ENCODE measurements at regions of chr19 and their contacts with region 1.

Region 1: DNA sequence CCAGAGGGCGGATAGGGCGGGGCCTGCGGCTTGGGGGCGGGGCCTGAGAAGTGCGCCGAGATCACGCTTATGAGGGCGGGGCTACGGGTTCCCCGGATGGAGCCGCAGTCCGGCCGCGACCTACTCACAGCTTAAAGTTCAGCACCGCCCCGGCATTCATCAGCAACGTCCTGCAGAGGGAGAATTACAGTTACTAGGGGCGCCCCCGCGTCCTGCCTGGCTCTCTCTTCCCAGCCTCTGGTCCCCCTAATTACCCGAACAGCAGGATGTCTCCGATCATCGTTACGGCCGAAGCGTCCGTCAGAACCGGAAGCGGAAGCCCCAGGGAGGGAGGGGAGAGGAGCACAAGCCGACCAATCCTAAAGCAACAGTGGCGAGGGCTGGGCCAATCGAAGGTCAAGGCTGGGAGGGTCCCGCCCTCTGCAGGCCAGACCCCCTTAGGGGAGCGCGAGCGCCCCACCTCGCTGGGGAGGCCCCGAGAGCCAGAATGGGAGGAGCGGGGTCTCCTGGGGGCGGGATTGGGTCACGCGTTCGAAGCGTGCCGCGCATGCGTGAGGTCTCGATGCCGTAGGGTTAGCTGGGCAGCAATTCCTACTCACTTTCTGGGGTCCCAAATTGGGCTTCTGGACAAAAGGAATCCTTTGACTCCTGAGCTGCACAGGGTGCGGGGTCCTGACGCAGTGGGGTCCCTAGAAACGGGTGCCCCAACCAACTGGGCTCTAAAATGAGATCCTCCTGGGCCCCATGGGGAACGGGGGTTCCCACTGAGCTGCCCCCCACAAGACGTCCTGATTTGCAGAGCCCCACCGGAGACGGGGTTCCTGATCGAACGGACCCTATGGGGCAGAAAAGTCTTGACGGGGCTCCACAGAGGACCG is at the start of gene SMIM7:
- DNase-seq: peak; percentile 100
- ATAC-seq: peak; percentile 93
- H3K4me3 ChIP-seq: peak within 1 kb of the TSS; percentile 62 to 89 (median 83)
- H3K4me3 Mint-ChIP-seq: peak within 1 kb of the TSS; percentile 99
- H3K27ac ChIP-seq: peak within 1 kb of the TSS; percentile 70 to 79
- H3K27ac Mint-ChIP-seq: peak within 1 kb of the TSS; percentile 97
- H3K4me1 ChIP-seq: peaks cover 26 to 42% of the 10 kb centered on the region in 2 donors
- H3K4me1 Mint-ChIP-seq: peaks cover 46% of the 10 kb centered on the region
- H3K27me3 ChIP-seq: no peaks in the 10 kb centered on the region
- H3K27me3 Mint-ChIP-seq: no peaks in the 10 kb centered on the region
- CTCF ChIP-seq: no peak
- total RNA-seq, gene SMIM7: 132 and 133 TPM in 2 replicates

Region 2: GRCh38 chr19:16435238-16435917 is 224.7 kb before region 1 on chr19:
- CTCF ChIA-PET with region 1: no interaction called
- POLR2A ChIA-PET with region 1: no interaction called
- intact Hi-C with region 1: no loop called
- DNase-seq: no peak
- ATAC-seq: no peak
- H3K4me3 ChIP-seq: no peak overlapping the region
- H3K4me3 Mint-ChIP-seq: no peak overlapping the region
- H3K27ac ChIP-seq: peak overlapping the region in 1 of 2 donors; percentile 53
- H3K27ac Mint-ChIP-seq: peak overlapping the region; percentile 79
- H3K4me1 ChIP-seq: peaks cover 17 to 34% of the 10 kb centered on the region in 2 donors
- H3K4me1 Mint-ChIP-seq: peaks cover 35% of the 10 kb centered on the region
- H3K27me3 ChIP-seq: no peaks in the 10 kb centered on the region
- H3K27me3 Mint-ChIP-seq: no peaks in the 10 kb centered on the region
- CTCF ChIP-seq: no peak

Region 3: GRCh38 chr19:16446724-16447368 is 213.2 kb before region 1 on chr19:
- CTCF ChIA-PET with region 1: no interaction called
- POLR2A ChIA-PET with region 1: no interaction called
- intact Hi-C with region 1: loop called (anchors 5 kb)
- DNase-seq: peak; percentile 79
- ATAC-seq: peak; percentile 34
- H3K4me3 ChIP-seq: peak overlapping the region in 1 of 5 experiments; percentile 26
- H3K4me3 Mint-ChIP-seq: peak overlapping the region; percentile 76
- H3K27ac ChIP-seq: peak overlapping the region; percentile 93 to 98
- H3K27ac Mint-ChIP-seq: peak overlapping the region; percentile 97
- H3K4me1 ChIP-seq: peaks cover 86 to 94% of the 10 kb centered on the region in 2 donors
- H3K4me1 Mint-ChIP-seq: peaks cover 85% of the 10 kb centered on the region
- H3K27me3 ChIP-seq: no peaks in the 10 kb centered on the region
- H3K27me3 Mint-ChIP-seq: no peaks in the 10 kb centered on the region
- CTCF ChIP-seq: no peak

Region 4: GRCh38 chr19:16542045-16542909 is 117.8 kb before region 1 on chr19 and contains the start of gene CHERP:
- CTCF ChIA-PET with region 1: no interaction called
- POLR2A ChIA-PET with region 1: interaction called, 8 read pairs
- intact Hi-C with region 1: loop called (anchors 1 kb)
- DNase-seq: peak; percentile 97
- ATAC-seq: peak; percentile 81
- H3K4me3 ChIP-seq: peak within 1 kb of the TSS; percentile 76 to 90 (median 88)
- H3K4me3 Mint-ChIP-seq: peak within 1 kb of the TSS; percentile 91
- H3K27ac ChIP-seq: peak within 1 kb of the TSS; percentile 61 to 77
- H3K27ac Mint-ChIP-seq: peak within 1 kb of the TSS; percentile 89
- H3K4me1 ChIP-seq: peaks cover 29 to 52% of the 10 kb centered on the region in 2 donors
- H3K4me1 Mint-ChIP-seq: peaks cover 55% of the 10 kb centered on the region
- H3K27me3 ChIP-seq: no peaks in the 10 kb centered on the region
- H3K27me3 Mint-ChIP-seq: no peaks in the 10 kb centered on the region
- CTCF ChIP-seq: no peak
- total RNA-seq, gene CHERP: 87.3 and 98.9 TPM in 2 replicates

Region 5: DNA sequence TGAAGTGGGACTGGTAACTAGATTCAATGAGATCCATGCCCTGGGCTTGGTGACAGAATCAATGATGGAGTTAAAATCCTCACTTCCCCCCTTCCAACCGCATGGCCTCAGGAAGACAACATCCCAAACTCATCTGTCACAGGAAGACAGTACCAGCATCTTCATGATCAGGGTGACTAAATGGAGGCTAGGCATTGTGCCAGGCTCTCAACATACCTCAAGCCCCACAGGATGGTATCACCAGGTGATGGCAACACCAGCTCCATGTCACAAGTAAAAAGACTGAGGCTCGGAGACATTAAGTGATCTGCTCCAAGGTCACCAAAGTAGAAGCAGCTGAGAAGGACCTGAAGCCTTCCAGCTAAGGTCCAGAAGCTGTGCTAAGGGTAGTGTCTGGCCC is 46.2 kb before region 1 on chr19:
- CTCF ChIA-PET with region 1: no interaction called
- POLR2A ChIA-PET with region 1: interaction called, 14 read pairs
- intact Hi-C with region 1: no loop called
- DNase-seq: no peak
- ATAC-seq: no peak
- H3K4me3 ChIP-seq: no peak overlapping the region
- H3K4me3 Mint-ChIP-seq: no peak overlapping the region
- H3K27ac ChIP-seq: no peak overlapping the region
- H3K27ac Mint-ChIP-seq: peak overlapping the region; percentile 26
- H3K4me1 ChIP-seq: peaks cover 59 to 60% of the 10 kb centered on the region in 2 donors
- H3K4me1 Mint-ChIP-seq: peaks cover 85% of the 10 kb centered on the region
- H3K27me3 ChIP-seq: no peaks in the 10 kb centered on the region
- H3K27me3 Mint-ChIP-seq: no peaks in the 10 kb centered on the region
- CTCF ChIP-seq: no peak

Region 6: DNA sequence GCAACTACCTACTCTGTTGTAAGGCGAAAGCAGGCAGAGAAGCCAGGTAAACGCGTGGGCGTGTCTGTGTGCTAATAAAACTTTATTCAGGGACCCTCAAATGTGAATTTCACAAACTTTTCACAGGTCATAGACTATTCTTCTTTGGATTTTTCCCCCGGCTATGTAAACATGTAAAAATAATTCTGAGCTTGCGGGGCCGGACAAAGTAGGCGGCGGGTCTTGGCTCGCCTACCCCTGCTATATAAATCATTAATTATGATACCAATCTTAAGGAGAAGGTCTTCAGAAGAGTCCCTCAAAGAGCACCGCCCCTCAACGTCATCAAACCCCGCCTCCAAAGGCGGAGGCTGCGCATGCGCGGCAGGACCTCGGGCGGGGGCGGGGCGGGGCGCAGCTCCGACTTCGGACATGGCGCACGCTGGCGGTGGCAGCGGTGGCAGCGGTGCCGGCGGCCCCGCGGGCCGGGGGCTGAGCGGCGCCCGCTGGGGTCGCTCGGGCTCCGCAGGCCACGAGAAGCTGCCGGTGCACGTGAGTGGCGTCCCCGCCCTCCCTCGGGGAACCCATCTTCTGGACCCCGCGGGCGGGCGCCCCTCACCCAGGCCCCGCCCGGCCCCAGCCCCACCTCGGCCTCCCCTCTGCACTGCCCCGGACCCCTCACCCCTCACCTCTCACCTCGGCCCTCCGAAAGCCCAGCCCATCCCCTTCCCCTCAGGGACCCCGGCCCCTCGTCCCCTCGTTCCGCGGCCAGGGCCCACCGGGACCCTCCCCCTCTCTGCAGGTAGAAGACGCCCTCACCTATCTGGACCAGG is 169.1 kb after region 1 on chr19 and contains the start of gene SIN3B:
- CTCF ChIA-PET with region 1: no interaction called
- POLR2A ChIA-PET with region 1: no interaction called
- intact Hi-C with region 1: loop called (anchors 2 kb)
- DNase-seq: peak; percentile 97
- ATAC-seq: peak; percentile 90
- H3K4me3 ChIP-seq: peak within 1 kb of the TSS; percentile 35 to 78 (median 66)
- H3K4me3 Mint-ChIP-seq: peak within 1 kb of the TSS; percentile 87
- H3K27ac ChIP-seq: peak within 1 kb of the TSS; percentile 20 to 76
- H3K27ac Mint-ChIP-seq: peak within 1 kb of the TSS; percentile 84
- H3K4me1 ChIP-seq: peaks cover 29 to 34% of the 10 kb centered on the region in 2 donors
- H3K4me1 Mint-ChIP-seq: peaks cover 51% of the 10 kb centered on the region
- H3K27me3 ChIP-seq: peaks cover 0 to 17% (median 5%) of the 10 kb centered on the region in 4 experiments
- H3K27me3 Mint-ChIP-seq: peaks cover 31% of the 10 kb centered on the region
- CTCF ChIP-seq: no peak
- total RNA-seq, gene SIN3B: 118 and 131 TPM in 2 replicates